Ovary (tissue), 10 donors: ENCODE measurements at regions of chr21 and their contacts with region 1.

Region 1: GRCh38 chr21:34345091-34345871 is 18.5 kb upstream of the KCNE2 start:
- DNase-seq: peak in 2 of 5 donors; percentile 13 to 43
- H3K4me3 ChIP-seq: no peak overlapping the region
- H3K27ac ChIP-seq: peak overlapping the region in 1 of 2 donors; percentile 5
- H3K4me1 ChIP-seq: peaks cover 5% of the 10 kb centered on the region
- H3K27me3 ChIP-seq: no peaks in the 10 kb centered on the region
- CTCF ChIP-seq: no peak
- EP300 ChIP-seq: no peak
- POLR2A ChIP-seq: no peak

Region 2: DNA sequence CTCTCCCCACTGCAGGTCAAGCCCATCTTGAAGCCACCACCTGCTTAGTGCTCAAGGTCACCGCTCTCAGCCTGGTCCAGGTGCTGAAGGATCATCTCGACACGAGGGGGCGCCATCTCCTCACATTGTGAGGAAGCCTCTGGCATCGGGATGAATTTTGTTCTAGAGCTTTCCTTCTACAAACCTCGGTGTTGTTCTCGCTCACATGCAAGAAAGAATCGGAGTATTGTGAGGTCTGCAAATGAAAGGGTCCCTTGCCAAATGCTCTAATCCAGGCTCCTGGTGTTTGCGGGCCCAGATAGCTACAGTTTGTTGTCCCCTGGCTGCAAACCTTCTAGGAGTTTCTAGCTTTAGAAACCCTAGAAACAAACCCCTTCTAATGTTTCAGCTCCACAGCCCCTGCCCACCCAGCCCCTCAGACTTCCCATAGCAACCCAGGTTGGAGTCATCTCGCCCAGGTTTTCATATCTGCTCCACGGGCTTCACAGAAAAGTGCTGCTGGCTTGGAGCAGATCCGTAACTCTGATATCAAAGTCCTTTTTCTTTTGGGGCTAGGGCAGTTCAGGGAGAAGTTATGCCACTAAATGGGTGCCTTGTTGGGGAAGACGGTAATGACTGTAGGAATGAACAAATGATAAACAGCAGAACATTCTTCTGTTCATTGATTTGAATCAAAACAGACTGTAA is 421.1 kb before region 1 on chr21:
- intact Hi-C with region 1: loop called (anchors 2 to 5 kb)
- DNase-seq: peak; percentile 84 to 94 (median 91)
- H3K4me3 ChIP-seq: no peak overlapping the region
- H3K27ac ChIP-seq: no peak overlapping the region
- H3K4me1 ChIP-seq: peaks cover 2% of the 10 kb centered on the region
- H3K27me3 ChIP-seq: no peaks in the 10 kb centered on the region
- CTCF ChIP-seq: peak; percentile 82 to 89 (median 84)
- EP300 ChIP-seq: no peak
- POLR2A ChIP-seq: no peak

Region 3: DNA sequence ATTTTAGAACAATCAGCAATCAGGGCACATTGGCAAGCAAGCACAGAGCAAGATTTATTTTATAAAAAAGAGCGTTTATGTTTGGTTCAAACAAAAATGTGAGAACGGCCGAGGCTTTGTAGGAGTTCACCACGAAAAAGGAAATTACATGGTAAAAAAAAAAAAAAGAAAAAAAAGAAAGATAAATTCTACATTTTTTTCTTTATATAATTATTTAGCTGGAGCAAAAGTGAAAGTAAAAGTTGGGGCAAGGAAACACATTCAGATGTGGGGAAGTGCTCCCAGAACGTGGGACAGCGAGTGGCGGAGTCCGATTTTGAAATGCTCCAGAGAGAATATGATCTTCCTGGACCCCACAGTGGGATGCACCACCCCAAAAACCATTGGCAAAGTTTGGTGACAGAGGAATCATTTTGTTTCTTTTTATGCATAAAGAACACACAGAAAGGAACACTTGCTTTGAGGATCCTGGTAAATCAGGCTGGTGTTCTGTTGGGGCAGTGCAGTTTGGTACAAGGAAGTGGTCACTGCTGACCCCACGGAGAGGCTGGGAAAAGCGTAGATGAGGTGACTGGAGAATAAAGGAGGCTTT is 413.4 kb before region 1 on chr21:
- intact Hi-C with region 1: loop called in 1 of 4 experiments (anchors 5 kb)
- DNase-seq: no peak
- H3K4me3 ChIP-seq: peak overlapping the region; percentile 36
- H3K27ac ChIP-seq: no peak overlapping the region
- H3K4me1 ChIP-seq: peaks cover 4% of the 10 kb centered on the region
- H3K27me3 ChIP-seq: no peaks in the 10 kb centered on the region
- CTCF ChIP-seq: no peak
- EP300 ChIP-seq: no peak
- POLR2A ChIP-seq: no peak

Region 4: GRCh38 chr21:34073032-34073869 is 272.0 kb before region 1 on chr21 and contains the starts of genes MRPS6 and SLC5A3:
- intact Hi-C with region 1: loop called in 1 of 4 experiments (anchors 5 kb)
- DNase-seq: peak; percentile 81 to 90 (median 87)
- H3K4me3 ChIP-seq: peak within 1 kb of the TSS; percentile 83
- H3K27ac ChIP-seq: peak within 1 kb of the TSS; percentile 91 to 99
- H3K4me1 ChIP-seq: peaks cover 10% of the 10 kb centered on the region
- H3K27me3 ChIP-seq: no peaks in the 10 kb centered on the region
- CTCF ChIP-seq: peak in 1 of 3 donors; percentile 7
- EP300 ChIP-seq: no peak
- POLR2A ChIP-seq: peak; percentile 61
- total RNA-seq, gene MRPS6: 19.1 to 49.9 (median 45.8) TPM
- total RNA-seq, gene SLC5A3: 9.8 to 16.9 (median 14.9) TPM